ENCODE measurements at regions of chr3 and their contacts with region 1.

Region 1: DNA sequence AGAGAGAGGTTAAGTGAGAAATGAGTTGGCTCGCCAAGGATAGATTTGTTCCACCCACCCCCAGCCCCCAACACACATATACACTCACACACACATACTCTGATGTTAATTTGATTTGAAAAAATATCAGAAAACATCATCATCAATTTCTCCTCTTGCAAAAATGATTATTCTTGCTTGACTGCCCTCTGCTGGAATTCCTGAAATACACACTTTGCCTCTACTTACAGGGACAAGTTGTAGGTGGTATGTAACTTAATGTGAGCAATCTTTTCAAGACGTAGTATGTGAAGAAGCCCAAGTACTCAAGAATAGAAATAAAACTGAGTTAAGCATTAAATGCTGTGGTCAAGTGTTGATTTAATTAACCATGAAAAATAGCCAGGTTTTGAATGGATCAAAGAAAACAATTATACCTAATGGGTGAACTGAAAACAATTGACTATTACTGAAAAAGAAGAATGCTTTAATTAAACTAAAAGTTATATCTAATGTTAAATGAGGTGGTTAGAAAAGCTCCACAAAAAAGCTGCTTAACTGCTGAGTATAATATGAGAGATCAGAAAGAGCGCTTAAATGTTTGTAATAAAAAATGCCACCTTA is 46.6 kb upstream of the MDFIC2 start:
- DNase-seq: peak in 2 of 7 donors; percentile 2 to 7
- H3K4me3 ChIP-seq: no peak overlapping the region
- H3K27ac ChIP-seq: no peak overlapping the region
- H3K4me1 ChIP-seq: no peaks in the 10 kb centered on the region
- H3K27me3 ChIP-seq: no peaks in the 10 kb centered on the region
- CTCF ChIP-seq: peak; percentile 23 to 62 (median 49)
- POLR2A ChIP-seq: no peak

Region 2: DNA sequence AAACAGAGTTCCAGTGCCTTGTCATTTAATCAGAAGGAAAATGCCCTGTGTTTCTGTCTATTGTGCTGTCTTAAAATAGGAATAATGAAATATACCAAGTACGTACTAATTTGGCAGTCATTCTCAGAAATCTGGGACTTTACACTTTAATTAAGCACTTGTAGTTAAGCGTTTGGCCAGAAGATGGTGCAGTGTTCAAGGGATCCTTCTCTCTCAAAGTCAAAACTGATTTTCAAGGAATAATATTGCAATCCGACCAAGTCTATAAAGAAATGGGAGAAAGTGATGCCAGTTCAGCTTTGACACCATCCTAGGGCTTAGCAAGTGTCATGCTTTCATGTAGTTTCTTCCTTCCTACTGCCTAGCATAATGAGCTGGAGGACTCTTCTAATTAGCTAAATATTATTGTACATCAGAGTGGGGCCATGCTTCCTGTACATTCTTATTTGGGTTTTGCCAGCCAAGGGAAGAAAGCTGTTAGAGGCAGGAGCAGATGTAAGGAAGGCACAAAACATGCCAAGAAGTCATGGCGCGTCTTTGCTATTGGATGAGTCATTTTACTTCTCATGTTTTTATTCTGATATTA is 294.8 kb before region 1 on chr3:
- intact Hi-C with region 1: loop called in 1 of 2 experiments (anchors 10 kb)
- DNase-seq: peak in 3 of 7 donors; percentile 12 to 25 (median 25)
- H3K4me3 ChIP-seq: no peak overlapping the region
- H3K27ac ChIP-seq: no peak overlapping the region
- H3K4me1 ChIP-seq: no peaks in the 10 kb centered on the region
- H3K27me3 ChIP-seq: no peaks in the 10 kb centered on the region
- CTCF ChIP-seq: peak; percentile 50 to 66 (median 56)
- POLR2A ChIP-seq: no peak